A549 (cell line): ENCODE measurements at regions of chr19 and their contacts with region 1.

Region 1: GRCh38 chr19:29714953-29715700 is at the start of gene C19orf12:
- DNase-seq: peak; percentile 63 to 77
- ATAC-seq: peak; percentile 83 to 86
- H3K4me3 ChIP-seq: peak within 1 kb of the TSS; percentile 82
- H3K27ac ChIP-seq: peak within 1 kb of the TSS; percentile 91 to 93
- H3K4me1 ChIP-seq: peaks cover 21% of the 10 kb centered on the region
- CTCF ChIP-seq: no peak
- EP300 ChIP-seq: no peak
- POLR2A ChIP-seq: peak; percentile 93
- RAD21 ChIP-seq: no peak
- polyA plus RNA-seq, gene C19orf12: 33.6 and 34.3 TPM in 2 replicates

Region 2: GRCh38 chr19:29596885-29597525 is 118.1 kb before region 1 on chr19:
- CTCF ChIA-PET with region 1: interaction called, 18 read pairs
- POLR2A ChIA-PET with region 1: interaction called, 3 read pairs
- DNase-seq: peak in 1 of 2 experiments; percentile 64
- ATAC-seq: peak; percentile 69 to 70; a peak in 5 of 6 replicates
- H3K4me3 ChIP-seq: no peak overlapping the region
- H3K27ac ChIP-seq: no peak overlapping the region
- H3K4me1 ChIP-seq: no peaks in the 10 kb centered on the region
- CTCF ChIP-seq: peak; percentile 76
- EP300 ChIP-seq: no peak
- POLR2A ChIP-seq: no peak
- RAD21 ChIP-seq: peak; percentile 81 to 83

Region 3: DNA sequence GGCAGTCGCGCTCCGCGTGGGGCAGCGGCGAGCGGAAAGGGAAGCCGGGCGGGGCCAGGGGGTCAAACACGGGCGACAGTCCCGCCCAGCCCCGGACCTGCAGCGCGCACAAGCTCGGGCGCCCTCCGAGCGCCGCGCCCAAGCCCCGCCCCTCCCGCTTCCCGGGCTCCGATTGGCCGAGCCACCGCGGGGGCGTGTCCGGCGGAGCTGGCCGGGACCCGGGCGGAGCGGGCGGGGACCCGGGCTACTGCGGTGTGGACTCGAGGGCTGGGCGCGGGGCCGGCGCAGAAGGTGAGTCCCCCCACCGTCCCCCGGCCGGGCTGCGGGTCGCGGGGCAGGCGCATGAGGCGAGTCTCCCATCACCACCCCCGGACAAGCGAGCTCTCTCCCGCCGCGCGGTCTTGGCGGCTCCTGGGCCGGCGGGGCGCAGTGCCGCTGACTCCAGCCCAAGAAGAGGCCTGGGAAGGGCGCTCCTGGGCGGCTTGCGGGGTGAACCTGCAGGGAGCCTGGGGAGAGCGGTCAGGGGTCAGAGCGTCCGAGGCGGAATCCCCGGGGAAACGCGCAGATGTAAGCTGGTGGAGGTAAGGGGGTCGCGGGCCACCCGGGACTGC is 49.8 kb before region 1 on chr19 and contains the start of gene PLEKHF1:
- CTCF ChIA-PET with region 1: interaction called, 110 read pairs
- POLR2A ChIA-PET with region 1: interaction called, 13 read pairs
- DNase-seq: peak; percentile 85 to 98
- ATAC-seq: peak; percentile 87 to 97
- H3K4me3 ChIP-seq: peak within 1 kb of the TSS; percentile 82
- H3K27ac ChIP-seq: peak within 1 kb of the TSS; percentile 74 to 86
- H3K4me1 ChIP-seq: peaks cover 19% of the 10 kb centered on the region
- CTCF ChIP-seq: no peak
- EP300 ChIP-seq: no peak
- POLR2A ChIP-seq: peak; percentile 35; the same call in 1 of the 2 replicates
- RAD21 ChIP-seq: no peak
- polyA plus RNA-seq, gene PLEKHF1: 2.1 and 2.3 TPM in 2 replicates

Region 4: GRCh38 chr19:29687244-29687896 is 27.8 kb before region 1 on chr19:
- CTCF ChIA-PET with region 1: interaction called, 147 read pairs
- POLR2A ChIA-PET with region 1: interaction called, 4 read pairs
- DNase-seq: peak in 1 of 2 experiments; percentile 52
- ATAC-seq: peak; percentile 15 to 60; a peak in 4 of 6 replicates
- H3K4me3 ChIP-seq: no peak overlapping the region
- H3K27ac ChIP-seq: peak overlapping the region; percentile 42 to 65; a peak in 5 of 6 replicates
- H3K4me1 ChIP-seq: peaks cover 14% of the 10 kb centered on the region; the same call in 2 of the 3 replicates
- CTCF ChIP-seq: no peak
- EP300 ChIP-seq: no peak
- POLR2A ChIP-seq: no peak
- RAD21 ChIP-seq: no peak

Region 5: GRCh38 chr19:29745253-29745652 is 30.1 kb after region 1 on chr19:
- CTCF ChIA-PET with region 1: interaction called, 14 read pairs
- POLR2A ChIA-PET with region 1: interaction called, 3 read pairs
- DNase-seq: no peak
- ATAC-seq: peak; percentile 81 to 93
- H3K4me3 ChIP-seq: no peak overlapping the region
- H3K27ac ChIP-seq: no peak overlapping the region
- H3K4me1 ChIP-seq: no peaks in the 10 kb centered on the region
- CTCF ChIP-seq: peak; percentile 30
- EP300 ChIP-seq: no peak
- POLR2A ChIP-seq: no peak
- RAD21 ChIP-seq: 0 out of 5 replicates have a peak, but pooled peaks of 1 of the 2 experiments have one; percentile 6

Region 6: GRCh38 chr19:29866011-29866410 is 150.9 kb after region 1 on chr19:
- CTCF ChIA-PET with region 1: interaction called, 362 read pairs
- POLR2A ChIA-PET with region 1: no interaction called
- DNase-seq: no peak
- ATAC-seq: no peak
- H3K4me3 ChIP-seq: no peak overlapping the region
- H3K27ac ChIP-seq: no peak overlapping the region
- H3K4me1 ChIP-seq: no peaks in the 10 kb centered on the region
- CTCF ChIP-seq: no peak
- EP300 ChIP-seq: no peak
- POLR2A ChIP-seq: no peak
- RAD21 ChIP-seq: no peak